GM12878 (cell line): ENCODE measurements at regions of chr12 and their contacts with region 1.

Region 1: DNA sequence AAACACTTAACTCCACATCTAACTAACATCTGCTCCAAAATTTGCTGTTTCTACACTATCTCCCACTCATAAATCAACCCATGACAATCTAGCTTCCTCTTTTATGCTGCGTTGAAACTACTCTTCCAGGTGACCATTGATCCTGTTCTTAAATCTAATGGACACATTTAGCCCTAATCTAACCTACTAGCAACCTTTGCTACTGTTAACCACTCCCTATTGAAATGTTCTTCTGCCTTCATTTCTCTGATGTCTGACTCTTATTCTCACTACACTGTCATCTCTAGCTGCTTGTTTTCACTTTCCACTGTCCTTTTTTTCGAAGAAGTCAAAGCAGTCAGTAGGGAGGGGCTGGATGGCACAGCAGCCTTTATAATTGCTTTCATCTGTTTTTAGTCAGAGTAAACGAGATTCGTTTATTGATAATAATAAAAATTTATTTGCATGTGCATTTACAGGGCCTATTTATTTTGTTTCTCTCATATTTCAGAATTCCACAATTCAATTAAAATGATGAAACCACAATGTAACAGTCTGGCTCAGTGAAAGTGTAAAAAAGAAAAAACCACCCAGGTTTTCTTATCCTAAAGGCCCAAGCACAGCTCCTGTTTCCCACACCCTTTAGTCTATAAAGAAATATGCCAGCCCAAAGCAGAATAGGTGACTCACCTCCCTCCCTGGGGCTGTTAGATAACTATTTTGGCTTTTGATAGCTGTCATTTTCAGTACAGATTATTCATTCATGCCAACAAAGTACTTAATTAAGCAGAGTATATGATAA is 44.9 kb downstream of the ATP2B1 start:
- DNase-seq: peak; percentile 37
- ATAC-seq: peak; percentile 79
- H3K4me3 ChIP-seq: peak overlapping the region; percentile 3; the same call in 1 of the 2 replicates
- H3K27ac ChIP-seq: peak overlapping the region; percentile 5; the same call in 1 of the 2 replicates
- H3K4me1 ChIP-seq: peaks cover 26% of the 10 kb centered on the region; the same call in 1 of the 2 replicates
- H3K27me3 ChIP-seq: no peaks in the 10 kb centered on the region
- CTCF ChIP-seq: no peak
- EP300 ChIP-seq: no peak
- POLR2A ChIP-seq: no peak
- RAD21 ChIP-seq: no peak

Region 2: GRCh38 chr12:89689306-89689705 is 25.5 kb after region 1 on chr12:
- CTCF ChIA-PET with region 1: interaction called, 7 read pairs
- POLR2A ChIA-PET with region 1: interaction called, 7 read pairs
- RAD21 ChIA-PET with region 1: interaction called, 6 read pairs
- SMC1A ChIA-PET with region 1: interaction called, 10 read pairs
- in situ Hi-C with region 1: no loop called
- intact Hi-C with region 1: no loop called
- DNase-seq: no peak
- ATAC-seq: no peak
- H3K4me3 ChIP-seq: no peak overlapping the region
- H3K27ac ChIP-seq: no peak overlapping the region
- H3K4me1 ChIP-seq: peaks cover 3% of the 10 kb centered on the region; the same call in 1 of the 2 replicates
- H3K27me3 ChIP-seq: no peaks in the 10 kb centered on the region
- CTCF ChIP-seq: no peak
- EP300 ChIP-seq: no peak
- POLR2A ChIP-seq: no peak
- RAD21 ChIP-seq: no peak

Region 3: DNA sequence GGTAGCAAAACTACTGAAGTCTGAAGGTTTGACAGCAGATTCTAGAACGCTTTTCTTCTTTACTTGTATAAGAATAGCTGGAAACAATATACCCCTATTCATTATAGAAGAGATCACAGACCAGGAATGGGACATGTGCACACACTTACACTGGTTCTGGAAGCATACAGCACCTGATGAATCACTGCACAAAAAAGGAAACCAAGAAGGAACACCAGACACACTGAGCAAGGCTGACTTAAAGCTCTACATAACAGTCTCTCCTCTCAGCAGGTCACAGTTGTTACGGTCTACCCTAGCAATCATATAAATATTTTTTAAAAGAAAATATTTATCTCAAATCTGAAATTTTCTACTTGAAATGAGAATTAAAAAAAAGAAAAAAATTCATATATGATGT is 31.3 kb after region 1 on chr12:
- CTCF ChIA-PET with region 1: interaction called, 7 read pairs
- POLR2A ChIA-PET with region 1: interaction called, 7 read pairs
- RAD21 ChIA-PET with region 1: interaction called, 10 read pairs
- SMC1A ChIA-PET with region 1: interaction called, 15 read pairs
- in situ Hi-C with region 1: no loop called
- intact Hi-C with region 1: no loop called
- DNase-seq: no peak
- ATAC-seq: peak; percentile 18
- H3K4me3 ChIP-seq: no peak overlapping the region
- H3K27ac ChIP-seq: no peak overlapping the region
- H3K4me1 ChIP-seq: peaks cover 9% of the 10 kb centered on the region
- H3K27me3 ChIP-seq: no peaks in the 10 kb centered on the region
- CTCF ChIP-seq: no peak
- EP300 ChIP-seq: no peak
- POLR2A ChIP-seq: no peak
- RAD21 ChIP-seq: no peak